Activated T-helper 1 cell treated with anti-CD3 and anti-CD28 coated beads, Interleukin-12 subunit alpha, Interleukin-12 subunit beta, Interleukin-2, Interleukin-4 antibody, amounts not matched to agents 30 ng/mL and 10 ng/mL and 1 ng/mL, durations not matched to agents 14 hours and 24 hours and 36 hours (primary cell): ENCODE measurements at regions of chr2 and their contacts with region 1.

Region 1: GRCh38 chr2:170973492-170974303 is 44.6 kb downstream of the GORASP2 start:
- DNase-seq: peak; percentile 77
- H3K4me3 Mint-ChIP-seq: peak overlapping the region; percentile 73
- H3K27ac Mint-ChIP-seq: no peak overlapping the region
- H3K4me1 Mint-ChIP-seq: peaks cover 16% of the 10 kb centered on the region
- H3K27me3 Mint-ChIP-seq: no peaks in the 10 kb centered on the region

Region 2: GRCh38 chr2:170038734-170039133 is 935.0 kb before region 1 on chr2:
- intact Hi-C with region 1: no loop called
- DNase-seq: no peak
- H3K4me3 Mint-ChIP-seq: no peak overlapping the region
- H3K27ac Mint-ChIP-seq: no peak overlapping the region
- H3K4me1 Mint-ChIP-seq: no peaks in the 10 kb centered on the region
- H3K27me3 Mint-ChIP-seq: no peaks in the 10 kb centered on the region

Region 3: DNA sequence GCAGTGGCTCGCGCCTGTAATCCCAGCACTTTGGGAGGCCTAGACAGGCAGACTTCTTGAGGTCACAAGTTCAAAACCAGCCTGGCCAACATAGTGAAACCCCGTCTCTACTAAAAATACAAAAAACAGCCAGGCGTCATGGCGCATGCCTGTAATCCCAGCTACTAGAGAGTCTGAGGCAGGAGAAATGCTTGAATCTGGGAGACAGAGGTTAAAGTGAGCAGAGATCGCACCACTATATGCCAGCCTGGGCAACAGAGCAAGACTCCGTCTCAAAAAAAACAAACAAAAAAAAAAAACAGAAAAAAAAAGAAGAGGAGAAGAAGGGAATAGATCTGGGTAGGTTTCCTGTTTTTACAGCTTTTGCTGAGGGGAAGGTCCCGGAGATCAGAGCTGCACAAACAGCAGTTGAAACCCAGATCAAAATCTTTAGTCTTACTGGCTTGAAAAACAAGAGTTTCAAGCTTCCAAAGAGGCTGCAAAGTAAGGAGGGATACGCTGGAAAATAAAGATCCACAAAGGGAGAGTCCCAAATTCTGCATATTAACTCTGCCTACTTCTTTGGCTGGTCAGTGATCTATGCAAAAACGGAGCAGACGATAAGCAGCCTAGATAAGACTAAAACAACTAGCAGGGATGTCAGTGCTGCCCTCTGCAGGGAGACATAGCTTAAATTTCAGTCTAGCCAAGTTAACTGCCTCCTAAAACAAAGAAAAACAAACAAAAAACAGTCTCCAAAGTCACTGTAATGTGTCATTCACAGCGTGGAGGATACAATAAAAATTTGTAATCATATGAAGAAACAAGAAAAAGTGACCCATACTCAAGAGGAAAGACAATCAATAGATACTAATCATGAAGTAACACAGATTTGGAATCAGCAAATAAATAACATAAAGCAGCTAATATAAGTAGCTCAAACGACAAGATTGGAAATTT is 112.9 kb after region 1 on chr2:
- intact Hi-C with region 1: loop called (anchors 1 kb)
- DNase-seq: peak; percentile 23
- H3K4me3 Mint-ChIP-seq: peak overlapping the region; percentile 77
- H3K27ac Mint-ChIP-seq: peak overlapping the region; percentile 82
- H3K4me1 Mint-ChIP-seq: peaks cover 52% of the 10 kb centered on the region
- H3K27me3 Mint-ChIP-seq: no peaks in the 10 kb centered on the region

Region 4: GRCh38 chr2:171260471-171261424 is 287.1 kb after region 1 on chr2:
- intact Hi-C with region 1: loop called (anchors 1 kb)
- DNase-seq: no peak
- H3K4me3 Mint-ChIP-seq: no peak overlapping the region
- H3K27ac Mint-ChIP-seq: peak overlapping the region; percentile 83
- H3K4me1 Mint-ChIP-seq: peaks cover 31% of the 10 kb centered on the region
- H3K27me3 Mint-ChIP-seq: no peaks in the 10 kb centered on the region

Region 5: DNA sequence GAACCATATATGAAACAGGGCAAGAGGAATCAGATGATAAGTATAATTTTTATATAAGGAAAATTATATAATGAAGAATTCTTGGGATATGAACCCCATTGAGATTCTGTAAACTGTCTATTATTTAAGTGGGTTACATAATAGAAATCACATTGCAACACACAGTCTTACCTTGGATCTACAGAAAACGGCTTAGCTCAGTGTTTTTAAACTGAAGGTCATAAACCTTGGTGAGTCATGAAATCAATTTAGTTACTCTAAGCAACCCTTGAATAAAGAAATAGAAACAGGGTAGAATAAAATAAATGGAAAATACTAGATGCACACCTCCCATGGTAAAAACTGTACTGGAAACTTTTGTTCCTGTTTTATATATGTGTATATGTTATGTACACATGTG is 409.4 kb after region 1 on chr2:
- intact Hi-C with region 1: no loop called
- DNase-seq: no peak
- H3K4me3 Mint-ChIP-seq: no peak overlapping the region
- H3K27ac Mint-ChIP-seq: no peak overlapping the region
- H3K4me1 Mint-ChIP-seq: no peaks in the 10 kb centered on the region
- H3K27me3 Mint-ChIP-seq: no peaks in the 10 kb centered on the region

Region 6: DNA sequence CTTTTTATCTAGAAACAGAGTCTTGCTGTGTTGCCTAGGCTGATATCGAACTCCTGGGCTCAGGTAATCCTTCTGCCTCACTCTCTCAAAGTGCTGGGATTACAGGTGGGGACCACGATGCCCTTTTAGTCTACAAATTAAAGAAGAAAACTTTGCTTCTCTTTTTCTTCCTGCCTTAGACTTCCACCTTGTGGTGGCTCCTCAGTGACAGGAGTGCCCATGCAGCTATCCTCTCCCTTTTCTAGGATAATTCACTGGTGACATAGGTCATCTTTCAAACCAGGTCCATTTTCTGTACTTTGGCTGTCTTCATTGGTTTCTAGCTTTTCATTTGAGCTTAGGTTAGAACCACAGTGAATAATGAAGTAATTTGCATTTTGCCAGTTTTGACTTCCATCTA is 474.0 kb after region 1 on chr2:
- intact Hi-C with region 1: loop called (anchors 1 kb)
- DNase-seq: no peak
- H3K4me3 Mint-ChIP-seq: no peak overlapping the region
- H3K27ac Mint-ChIP-seq: no peak overlapping the region
- H3K4me1 Mint-ChIP-seq: no peaks in the 10 kb centered on the region
- H3K27me3 Mint-ChIP-seq: no peaks in the 10 kb centered on the region

Region 7: GRCh38 chr2:171687287-171688128 is 713.8 kb after region 1 on chr2 and contains the start of gene DYNC1I2:
- intact Hi-C with region 1: loop called (anchors 5 kb)
- DNase-seq: peak; percentile 63
- H3K4me3 Mint-ChIP-seq: peak within 1 kb of the TSS; percentile 85
- H3K27ac Mint-ChIP-seq: peak within 1 kb of the TSS; percentile 84
- H3K4me1 Mint-ChIP-seq: peaks cover 20% of the 10 kb centered on the region
- H3K27me3 Mint-ChIP-seq: peaks cover 10% of the 10 kb centered on the region
- total RNA-seq, gene DYNC1I2: 49.3 and 49.4 TPM in 2 replicates